ENCODE measurements at regions of chr4 and their contacts with region 1.

Region 1: DNA sequence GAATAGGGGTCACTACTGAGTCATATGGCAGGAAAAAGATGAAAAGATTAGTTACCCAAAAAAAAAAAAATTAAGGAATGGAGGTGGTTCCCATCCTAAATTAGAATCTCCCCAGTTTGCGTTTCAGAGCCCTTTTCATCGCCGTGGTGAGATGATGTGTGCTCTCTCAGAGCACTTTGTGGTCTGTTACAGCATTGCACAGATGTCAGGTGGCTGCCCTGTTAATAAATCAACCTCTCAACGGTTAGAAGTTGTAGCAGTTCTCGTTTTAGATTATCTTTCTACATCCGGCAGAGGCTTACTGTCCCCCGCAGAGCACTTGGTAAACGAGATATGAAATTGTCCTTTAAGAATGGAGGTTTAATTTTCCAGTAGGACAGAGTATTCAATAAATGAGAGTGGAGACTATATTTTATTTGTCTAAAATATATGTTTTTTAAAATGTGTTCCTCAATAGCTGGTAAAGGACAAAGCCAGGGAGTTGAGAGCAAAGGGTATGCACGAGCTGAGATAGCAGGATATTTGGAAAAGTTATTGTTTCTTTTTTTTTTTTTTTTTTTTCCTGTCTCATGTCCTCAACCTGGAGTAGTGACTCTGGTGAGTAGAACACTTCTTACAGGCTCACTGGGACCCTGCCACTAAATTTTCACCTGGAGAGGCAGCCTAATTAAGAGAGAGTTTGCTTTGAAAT is 26.9 kb downstream of the AFF1 start:
- DNase-seq: peak in 1 of 2 donors; percentile 33
- ATAC-seq: peak; percentile 91 to 99 (median 94)
- H3K4me3 ChIP-seq: no peak overlapping the region
- H3K4me3 Mint-ChIP-seq: peak overlapping the region; percentile 52
- H3K27ac ChIP-seq: peak overlapping the region; percentile 25
- H3K27ac Mint-ChIP-seq: peak overlapping the region; percentile 67 to 87
- H3K4me1 ChIP-seq: peaks cover 15% of the 10 kb centered on the region
- H3K4me1 Mint-ChIP-seq: peaks cover 19 to 28% of the 10 kb centered on the region in 2 donors
- H3K27me3 ChIP-seq: no peaks in the 10 kb centered on the region
- H3K27me3 Mint-ChIP-seq: no peaks in the 10 kb centered on the region
- CTCF ChIP-seq: no peak

Region 2: GRCh38 chr4:86918539-86919072 is 43.1 kb before region 1 on chr4:
- intact Hi-C with region 1: no loop called
- DNase-seq: no peak
- ATAC-seq: no peak
- H3K4me3 ChIP-seq: no peak overlapping the region
- H3K4me3 Mint-ChIP-seq: no peak overlapping the region
- H3K27ac ChIP-seq: no peak overlapping the region
- H3K27ac Mint-ChIP-seq: no peak overlapping the region
- H3K4me1 ChIP-seq: no peaks in the 10 kb centered on the region
- H3K4me1 Mint-ChIP-seq: peaks cover 0 to 4% of the 10 kb centered on the region in 2 donors
- H3K27me3 ChIP-seq: no peaks in the 10 kb centered on the region
- H3K27me3 Mint-ChIP-seq: no peaks in the 10 kb centered on the region
- CTCF ChIP-seq: no peak

Region 3: DNA sequence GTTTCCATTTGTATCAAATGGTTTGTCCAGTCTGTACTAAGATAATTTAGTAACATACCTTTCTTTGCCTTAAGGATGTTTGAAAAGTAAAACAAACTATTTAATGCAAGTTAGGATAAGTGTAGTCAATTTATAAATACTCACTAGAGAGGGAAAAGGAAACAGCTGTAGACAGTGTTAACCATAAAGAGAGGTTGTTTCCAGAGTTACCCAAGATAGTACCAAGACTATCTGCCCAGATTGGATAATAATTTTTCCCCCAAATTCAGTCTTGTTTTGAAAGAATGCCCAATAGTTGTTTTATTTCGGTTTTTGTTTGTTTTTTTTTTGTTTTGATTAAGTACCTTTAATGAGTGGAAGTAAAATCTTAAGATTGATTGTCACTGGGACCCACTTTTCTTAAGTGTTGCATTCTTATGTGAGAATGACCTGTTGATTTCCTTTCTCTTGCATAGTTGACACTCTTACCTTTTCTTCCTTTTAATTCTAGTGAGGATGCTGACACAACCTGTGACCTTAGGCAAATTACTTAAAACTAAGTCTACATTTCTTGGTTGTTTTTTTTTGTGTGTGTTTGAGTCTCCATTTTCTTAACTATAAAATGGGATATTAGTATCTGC is 14.1 kb before region 1 on chr4:
- intact Hi-C with region 1: loop called (anchors 2 kb)
- DNase-seq: peak in 1 of 2 donors; percentile 11
- ATAC-seq: peak; percentile 80 to 92 (median 88)
- H3K4me3 ChIP-seq: no peak overlapping the region
- H3K4me3 Mint-ChIP-seq: peak overlapping the region; percentile 8
- H3K27ac ChIP-seq: no peak overlapping the region
- H3K27ac Mint-ChIP-seq: peak overlapping the region; percentile 4 to 66
- H3K4me1 ChIP-seq: peaks cover 15% of the 10 kb centered on the region
- H3K4me1 Mint-ChIP-seq: peaks cover 26 to 54% of the 10 kb centered on the region in 2 donors
- H3K27me3 ChIP-seq: no peaks in the 10 kb centered on the region
- H3K27me3 Mint-ChIP-seq: no peaks in the 10 kb centered on the region
- CTCF ChIP-seq: no peak

Measured in natural killer cell (primary cell).